Endothelial cell of umbilical vein (primary cell): ENCODE measurements at regions of chr3 and their contacts with region 1.

Region 1: DNA sequence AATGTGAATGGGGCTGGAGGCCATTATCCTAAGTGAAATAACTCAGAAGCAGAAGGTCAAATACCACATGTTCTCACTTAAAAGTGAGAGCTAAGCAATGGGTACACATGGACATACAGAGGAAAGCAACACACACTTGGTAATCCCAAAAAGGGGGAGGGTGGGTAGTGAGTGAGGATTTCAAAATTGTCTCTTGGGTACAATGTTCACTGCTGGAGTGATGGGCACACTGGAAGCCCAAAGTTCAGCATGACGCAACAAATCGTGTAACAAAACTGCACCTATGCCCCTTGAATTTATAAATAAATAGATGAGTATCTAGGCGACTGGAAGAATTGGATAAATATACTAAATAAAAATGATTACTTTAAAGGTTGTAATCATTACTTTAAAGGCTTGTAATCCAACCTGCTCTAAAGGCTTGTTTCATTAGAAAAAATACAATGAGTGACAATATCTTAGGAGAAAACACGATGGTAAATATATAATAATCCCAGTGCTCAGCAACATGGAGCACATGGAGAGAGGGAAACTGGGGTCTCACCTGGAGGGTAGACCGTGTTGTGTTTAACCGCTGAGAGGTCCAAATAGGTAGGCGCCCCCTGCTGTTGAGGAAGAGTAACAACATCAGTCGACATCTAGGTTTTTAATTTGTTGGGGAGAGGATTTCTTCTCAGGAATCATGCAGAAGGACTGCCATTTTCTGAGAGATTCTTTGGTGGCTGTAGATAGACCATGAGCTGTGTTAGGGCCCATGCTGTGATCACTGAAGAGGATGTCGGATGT is 78.5 kb upstream of the ROBO1 start:
- DNase-seq: no peak
- H3K4me3 ChIP-seq: no peak overlapping the region
- H3K27ac ChIP-seq: no peak overlapping the region
- H3K4me1 ChIP-seq: peaks cover 22% of the 10 kb centered on the region
- H3K27me3 ChIP-seq: no peaks in the 10 kb centered on the region
- CTCF ChIP-seq: peak; percentile 17 to 18
- POLR2A ChIP-seq: no peak

Region 2: DNA sequence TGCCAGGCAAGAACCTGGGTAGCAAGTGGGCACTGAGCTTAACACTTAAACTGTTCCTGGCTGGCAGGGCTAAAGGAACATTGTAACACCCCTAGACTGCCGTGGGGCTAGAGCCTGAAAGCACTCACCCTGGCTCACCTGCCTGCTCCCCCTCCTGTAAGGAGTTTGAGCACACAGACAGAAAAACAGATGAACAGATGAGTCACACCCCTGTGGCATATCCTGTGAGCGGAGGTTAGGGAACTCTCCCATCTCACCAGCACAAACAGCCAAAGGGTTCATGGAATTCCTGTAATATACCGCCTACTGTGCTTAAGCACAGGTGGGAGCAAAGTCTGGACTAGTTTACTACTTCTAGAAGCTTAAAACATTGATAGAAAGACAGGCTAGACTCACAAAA is 378.6 kb before region 1 on chr3:
- CTCF ChIA-PET with region 1: no interaction called
- POLR2A ChIA-PET with region 1: no interaction called
- dilution Hi-C with region 1: no loop called
- intact Hi-C with region 1: no loop called
- DNase-seq: no peak
- H3K4me3 ChIP-seq: no peak overlapping the region
- H3K27ac ChIP-seq: no peak overlapping the region
- H3K4me1 ChIP-seq: no peaks in the 10 kb centered on the region
- H3K27me3 ChIP-seq: no peaks in the 10 kb centered on the region
- CTCF ChIP-seq: no peak
- POLR2A ChIP-seq: no peak

Region 3: DNA sequence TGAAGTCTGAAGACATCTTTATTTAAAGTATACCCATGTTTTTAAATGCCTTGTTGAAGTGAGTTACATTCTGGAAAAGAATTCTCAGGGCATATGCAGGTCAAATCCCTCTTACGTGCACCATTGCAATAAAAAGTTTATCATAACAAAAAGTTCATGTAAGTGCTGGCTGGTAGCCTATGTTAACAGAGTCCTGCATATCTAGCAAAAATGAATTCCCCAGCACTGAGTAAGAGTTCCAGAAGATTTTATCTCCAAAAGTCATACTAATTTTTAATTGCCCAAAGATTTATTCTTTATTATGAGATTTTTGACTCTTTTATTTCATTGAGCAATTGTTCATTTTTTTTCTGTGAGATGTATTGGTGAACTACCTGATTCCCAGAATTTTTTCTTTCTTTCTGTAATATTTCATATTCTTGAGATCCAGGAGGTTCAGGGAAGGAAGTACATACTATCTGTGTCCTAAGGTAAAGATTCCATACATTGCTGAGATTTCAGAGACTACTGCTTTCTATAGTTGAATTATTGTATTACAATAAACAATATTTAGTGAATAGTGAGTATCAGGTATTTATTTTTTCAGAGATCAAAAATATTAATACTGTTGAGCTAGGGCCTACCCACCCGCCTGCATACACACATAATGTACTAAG is 26.3 kb after region 1 on chr3:
- CTCF ChIA-PET with region 1: no interaction called
- POLR2A ChIA-PET with region 1: no interaction called
- dilution Hi-C with region 1: no loop called
- intact Hi-C with region 1: loop called (anchors 1 kb)
- DNase-seq: peak; percentile 96
- H3K4me3 ChIP-seq: no peak overlapping the region
- H3K27ac ChIP-seq: peak overlapping the region; percentile 80
- H3K4me1 ChIP-seq: peaks cover 24% of the 10 kb centered on the region
- H3K27me3 ChIP-seq: no peaks in the 10 kb centered on the region
- CTCF ChIP-seq: no peak
- POLR2A ChIP-seq: peak; percentile 48

Region 4: GRCh38 chr3:79983121-79983520 is 136.8 kb after region 1 on chr3:
- CTCF ChIA-PET with region 1: no interaction called
- POLR2A ChIA-PET with region 1: no interaction called
- dilution Hi-C with region 1: no loop called
- intact Hi-C with region 1: loop called (anchors 10 kb)
- DNase-seq: peak; percentile 80
- H3K4me3 ChIP-seq: no peak overlapping the region
- H3K27ac ChIP-seq: no peak overlapping the region
- H3K4me1 ChIP-seq: peaks cover 7% of the 10 kb centered on the region
- H3K27me3 ChIP-seq: no peaks in the 10 kb centered on the region
- CTCF ChIP-seq: no peak
- POLR2A ChIP-seq: no peak